Astrocyte of the cerebellum (primary cell): ENCODE measurements at regions of chr17 and their contacts with region 1.

Region 1: DNA sequence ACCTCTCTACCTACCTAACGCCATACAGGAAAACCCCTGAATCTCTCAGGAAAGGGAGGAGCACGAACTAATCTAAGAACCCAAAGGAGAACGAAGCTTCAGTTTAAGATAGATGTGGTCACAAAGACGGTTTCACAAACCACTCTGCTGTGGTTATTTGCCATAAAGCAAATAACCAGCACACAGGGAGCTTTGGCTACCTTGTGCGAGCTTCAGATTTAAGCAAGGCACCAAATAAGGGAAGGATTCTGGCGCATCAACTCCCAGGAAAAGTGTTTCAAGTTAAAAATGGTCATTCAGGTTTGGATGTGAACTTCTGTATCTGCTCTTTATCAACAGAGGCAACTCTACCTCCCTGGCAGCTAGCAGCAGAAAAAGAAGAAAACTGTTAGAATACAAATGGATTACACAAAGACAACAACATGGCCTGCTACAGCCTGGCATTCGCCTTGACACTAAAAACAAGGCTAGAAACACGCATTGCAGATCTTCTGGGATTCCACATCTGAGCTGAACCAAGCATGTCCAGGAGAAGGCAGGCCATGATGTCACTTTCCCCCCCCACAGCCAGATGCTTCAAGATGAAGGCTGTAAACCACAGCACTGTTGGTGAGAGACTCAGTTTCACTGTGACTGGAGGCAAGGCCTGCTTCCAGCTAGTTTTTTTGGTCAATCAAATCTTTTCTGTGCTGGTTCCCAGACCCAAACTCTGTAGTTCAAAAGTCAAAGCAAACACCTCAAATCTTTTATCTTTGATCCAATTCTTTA is 43.6 kb downstream of the SMG6 start:
- DNase-seq: no peak
- H3K4me3 ChIP-seq: no peak overlapping the region
- CTCF ChIP-seq: no peak

Region 2: GRCh38 chr17:2094891-2095535 is 164.9 kb before region 1 on chr17:
- in situ Hi-C with region 1: loop called (anchors 25 kb)
- DNase-seq: no peak
- H3K4me3 ChIP-seq: no peak overlapping the region
- CTCF ChIP-seq: peak; percentile 83

Region 3: GRCh38 chr17:2468270-2468669 is 208.3 kb after region 1 on chr17:
- in situ Hi-C with region 1: no loop called
- DNase-seq: peak; percentile 96
- H3K4me3 ChIP-seq: no peak overlapping the region
- CTCF ChIP-seq: no peak